ENCODE measurements at regions of chr1 and their contacts with region 1.

Region 1: GRCh38 chr1:186653312-186653711 is 26.9 kb downstream of the PTGS2 start:
- DNase-seq: no peak
- H3K4me3 ChIP-seq: no peak overlapping the region
- H3K27ac ChIP-seq: no peak overlapping the region
- H3K4me1 ChIP-seq: peaks cover 6% of the 10 kb centered on the region
- H3K27me3 ChIP-seq: no peaks in the 10 kb centered on the region
- CTCF ChIP-seq: no peak
- POLR2A ChIP-seq: no peak

Region 2: GRCh38 chr1:186633116-186633515 is 20.2 kb before region 1 on chr1:
- CTCF ChIA-PET with region 1: no interaction called
- POLR2A ChIA-PET with region 1: no interaction called
- dilution Hi-C with region 1: no loop called
- intact Hi-C with region 1: loop called (anchors 2 kb)
- DNase-seq: peak; percentile 74
- H3K4me3 ChIP-seq: no peak overlapping the region
- H3K27ac ChIP-seq: peak overlapping the region; percentile 5
- H3K4me1 ChIP-seq: peaks cover 9% of the 10 kb centered on the region
- H3K27me3 ChIP-seq: no peaks in the 10 kb centered on the region
- CTCF ChIP-seq: no peak
- POLR2A ChIP-seq: no peak

Region 3: GRCh38 chr1:186884251-186884650 is 230.9 kb after region 1 on chr1:
- CTCF ChIA-PET with region 1: no interaction called
- POLR2A ChIA-PET with region 1: no interaction called
- dilution Hi-C with region 1: no loop called
- intact Hi-C with region 1: no loop called
- DNase-seq: no peak
- H3K4me3 ChIP-seq: no peak overlapping the region
- H3K27ac ChIP-seq: no peak overlapping the region
- H3K4me1 ChIP-seq: no peaks in the 10 kb centered on the region
- H3K27me3 ChIP-seq: no peaks in the 10 kb centered on the region
- CTCF ChIP-seq: no peak
- POLR2A ChIP-seq: no peak